ENCODE measurements at regions of chr12 and their contacts with region 1.

Region 1: GRCh38 chr12:96164951-96165811 is 29.0 kb upstream of the ELK3 start:
- DNase-seq: peak in 4 of 5 donors; percentile 45 to 63 (median 54)
- ATAC-seq: peak; percentile 75 to 87 (median 77)
- H3K4me3 ChIP-seq: no peak overlapping the region
- H3K27ac ChIP-seq: peak overlapping the region; percentile 47 to 95 (median 82)
- H3K4me1 ChIP-seq: peaks cover 0 to 49% (median 20%) of the 10 kb centered on the region in 12 donors
- H3K27me3 ChIP-seq: no peaks in the 10 kb centered on the region
- CTCF ChIP-seq: no peak
- POLR2A ChIP-seq: no peak

Region 2: DNA sequence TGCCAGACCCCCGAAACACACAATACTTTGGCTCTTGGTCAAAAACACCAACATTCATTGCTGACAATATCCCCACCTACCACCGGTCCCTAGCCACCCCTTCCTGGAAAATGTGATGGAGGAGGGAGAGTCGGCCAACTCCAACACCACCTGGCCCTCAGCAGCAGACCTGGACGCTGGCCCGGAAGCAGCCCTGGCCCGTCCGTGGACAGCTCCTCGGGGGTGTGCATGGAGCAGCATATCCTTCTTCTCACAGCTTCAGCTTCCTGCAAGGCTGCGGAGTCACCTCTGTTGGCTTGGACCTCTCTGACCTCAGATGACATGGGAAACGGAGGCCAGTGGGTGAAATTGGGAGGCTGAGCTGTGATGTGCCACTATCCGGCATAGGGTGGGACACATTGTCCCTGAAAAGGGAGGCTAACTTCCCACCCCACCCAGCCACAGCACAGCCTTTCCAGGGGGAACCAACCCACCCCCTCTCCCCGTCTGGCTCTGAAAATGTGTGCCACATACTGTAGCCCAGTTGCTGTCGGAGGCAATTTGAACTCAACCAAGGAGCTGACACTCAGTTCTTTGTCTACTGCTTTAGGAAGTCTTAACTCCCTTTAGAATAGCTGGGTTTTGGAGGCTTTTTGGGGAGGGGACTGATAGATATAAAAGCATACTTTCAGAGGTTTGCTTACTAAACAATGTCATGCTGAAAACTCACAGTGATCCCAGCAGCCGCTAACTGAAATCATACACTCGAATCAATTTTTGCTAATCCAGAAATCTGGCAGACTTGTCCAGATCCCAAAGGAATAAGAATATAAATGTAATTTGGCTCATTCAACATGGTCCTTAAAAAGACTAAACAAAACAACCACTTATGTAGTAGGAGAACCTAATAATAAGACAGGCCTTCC is 86.7 kb before region 1 on chr12:
- intact Hi-C with region 1: loop called in 1 of 10 experiments (anchors 2 kb)
- DNase-seq: peak; percentile 74 to 85 (median 83)
- ATAC-seq: peak; percentile 76 to 95 (median 90)
- H3K4me3 ChIP-seq: peak overlapping the region in 2 of 12 donors; percentile 10 to 13
- H3K27ac ChIP-seq: peak overlapping the region in 11 of 12 donors; percentile 18 to 83 (median 50)
- H3K4me1 ChIP-seq: peaks cover 0 to 35% (median 16%) of the 10 kb centered on the region in 12 donors
- H3K27me3 ChIP-seq: peaks cover 0 to 4% (median 0%) of the 10 kb centered on the region in 9 donors
- CTCF ChIP-seq: no peak
- POLR2A ChIP-seq: no peak